ENCODE measurements at regions of chr1 and their contacts with region 1.

Region 1: DNA sequence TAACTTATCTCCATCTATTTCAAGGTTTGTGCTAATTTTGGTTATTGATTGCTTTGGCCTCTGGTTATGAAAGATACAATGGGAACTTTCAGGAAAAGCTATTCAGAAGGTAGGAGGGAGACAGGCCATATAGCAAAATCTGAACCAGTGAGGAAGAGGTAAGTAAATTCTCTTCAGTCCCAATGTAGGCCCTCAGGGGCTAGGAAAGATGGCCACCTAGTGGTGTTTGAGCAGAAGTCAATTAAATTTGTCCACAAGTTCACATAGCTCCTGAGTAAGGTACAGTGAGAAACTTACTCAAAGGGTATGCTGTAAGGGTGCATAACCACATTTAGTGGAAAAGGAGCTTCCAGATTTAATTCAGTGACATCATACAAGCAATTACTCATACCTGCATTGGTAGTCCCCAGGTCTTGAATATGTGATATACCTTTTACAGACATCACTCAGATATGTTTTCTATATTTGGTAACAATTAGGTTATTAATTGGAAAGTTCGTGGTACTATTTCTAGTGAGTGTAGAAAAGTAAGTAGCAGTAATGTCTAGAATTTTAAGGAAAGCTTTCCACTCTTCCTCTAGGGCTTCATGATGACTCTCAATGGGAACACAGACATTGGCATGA is 21.4 kb upstream of the FMO1 start:
- DNase-seq: peak; percentile 42
- ATAC-seq: peak; percentile 96
- H3K4me3 ChIP-seq: no peak overlapping the region
- H3K27ac ChIP-seq: no peak overlapping the region
- H3K4me1 ChIP-seq: no peaks in the 10 kb centered on the region
- H3K27me3 ChIP-seq: no peaks in the 10 kb centered on the region
- CTCF ChIP-seq: peak; percentile 71 to 78 (median 75)
- POLR2A ChIP-seq: no peak
- RAD21 ChIP-seq: peak; percentile 88

Region 2: GRCh38 chr1:170685166-170685565 is 541.7 kb before region 1 on chr1:
- CTCF ChIA-PET with region 1: no interaction called
- POLR2A ChIA-PET with region 1: no interaction called
- RAD21 ChIA-PET with region 1: no interaction called
- intact Hi-C with region 1: loop called (anchors 10 kb)
- DNase-seq: no peak
- ATAC-seq: no peak
- H3K4me3 ChIP-seq: no peak overlapping the region
- H3K27ac ChIP-seq: no peak overlapping the region
- H3K4me1 ChIP-seq: no peaks in the 10 kb centered on the region
- H3K27me3 ChIP-seq: no peaks in the 10 kb centered on the region
- CTCF ChIP-seq: no peak
- POLR2A ChIP-seq: no peak
- RAD21 ChIP-seq: no peak

Region 3: DNA sequence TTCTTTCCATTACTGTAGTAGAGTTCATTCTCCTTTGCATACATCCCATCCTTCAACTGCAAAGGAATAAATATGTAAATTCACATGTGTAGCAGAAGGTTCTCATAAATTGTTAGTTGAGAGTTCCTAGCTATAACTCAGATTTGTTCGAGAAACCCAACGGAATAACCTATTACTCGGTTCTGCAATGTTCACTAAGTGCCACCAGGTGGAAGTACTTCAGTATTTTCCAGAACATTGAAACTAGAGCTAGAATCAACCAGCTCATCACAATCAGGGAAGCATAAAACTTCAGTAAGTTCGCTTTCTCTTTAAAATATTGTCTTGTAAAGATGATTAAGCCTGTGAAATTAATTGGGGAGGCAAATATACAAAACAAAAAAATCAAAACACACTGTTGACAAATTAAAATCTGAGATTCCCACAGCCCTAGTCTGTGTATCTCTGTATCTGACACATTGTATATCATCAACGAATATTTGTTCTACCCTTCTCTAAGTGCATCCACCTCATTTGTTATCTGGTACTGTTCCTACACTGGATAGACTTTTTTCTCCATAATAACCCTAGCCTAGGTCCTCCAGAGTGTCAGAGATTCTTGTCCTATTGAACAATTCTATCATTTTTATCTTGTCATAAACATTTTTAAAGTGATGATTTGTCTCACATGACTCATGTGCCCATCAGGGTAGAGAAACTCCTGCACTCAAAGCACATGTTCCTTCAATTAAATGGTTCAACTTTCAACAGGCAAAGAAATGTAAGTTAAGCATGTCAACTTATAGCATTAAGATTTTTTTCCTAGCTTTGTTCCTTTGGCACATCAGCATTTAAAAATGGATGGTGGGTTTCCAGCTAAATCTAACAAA is 259.6 kb before region 1 on chr1:
- CTCF ChIA-PET with region 1: interaction called, 75 read pairs
- POLR2A ChIA-PET with region 1: no interaction called
- RAD21 ChIA-PET with region 1: interaction called, 5 to 6 read pairs
- intact Hi-C with region 1: loop called (anchors 1 kb)
- DNase-seq: peak; percentile 32
- ATAC-seq: peak; percentile 90
- H3K4me3 ChIP-seq: no peak overlapping the region
- H3K27ac ChIP-seq: no peak overlapping the region
- H3K4me1 ChIP-seq: no peaks in the 10 kb centered on the region
- H3K27me3 ChIP-seq: no peaks in the 10 kb centered on the region
- CTCF ChIP-seq: peak; percentile 55 to 66 (median 63); a peak in 5 of 6 replicates
- POLR2A ChIP-seq: no peak
- RAD21 ChIP-seq: peak; percentile 62

Region 4: DNA sequence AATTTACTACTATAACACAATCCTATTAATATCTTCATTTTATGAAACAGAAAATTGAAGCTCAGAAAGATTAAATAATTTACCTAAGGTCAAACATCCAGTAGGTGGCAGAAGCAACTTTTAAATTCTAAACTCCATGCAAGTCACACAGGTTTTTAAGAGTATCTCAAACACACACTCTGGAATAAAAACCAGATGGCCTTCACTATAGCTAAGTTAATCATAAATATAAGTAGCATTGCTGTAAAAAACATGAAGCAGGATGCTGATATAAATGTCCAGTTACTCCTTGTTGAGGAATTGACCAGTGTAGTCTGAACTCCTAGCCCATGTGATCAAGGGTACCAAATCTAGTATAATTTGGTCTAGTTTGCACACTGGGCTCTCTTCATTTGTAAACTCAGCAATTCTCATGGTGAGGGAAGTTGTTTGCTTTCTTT is 145.5 kb before region 1 on chr1:
- CTCF ChIA-PET with region 1: interaction called, 20 read pairs
- POLR2A ChIA-PET with region 1: no interaction called
- RAD21 ChIA-PET with region 1: interaction called in 1 of 2 experiments, 3 read pairs
- intact Hi-C with region 1: loop called (anchors 1 kb)
- DNase-seq: peak; percentile 15
- ATAC-seq: no peak
- H3K4me3 ChIP-seq: no peak overlapping the region
- H3K27ac ChIP-seq: no peak overlapping the region
- H3K4me1 ChIP-seq: no peaks in the 10 kb centered on the region
- H3K27me3 ChIP-seq: no peaks in the 10 kb centered on the region
- CTCF ChIP-seq: peak; percentile 21 to 54 (median 47); a peak in 4 of 6 replicates
- POLR2A ChIP-seq: no peak
- RAD21 ChIP-seq: peak; percentile 61

Measured in HCT116 (cell line).